Gastrocnemius medialis (tissue), 4 donors: ENCODE measurements at regions of chr6 and their contacts with region 1.

Region 1: DNA sequence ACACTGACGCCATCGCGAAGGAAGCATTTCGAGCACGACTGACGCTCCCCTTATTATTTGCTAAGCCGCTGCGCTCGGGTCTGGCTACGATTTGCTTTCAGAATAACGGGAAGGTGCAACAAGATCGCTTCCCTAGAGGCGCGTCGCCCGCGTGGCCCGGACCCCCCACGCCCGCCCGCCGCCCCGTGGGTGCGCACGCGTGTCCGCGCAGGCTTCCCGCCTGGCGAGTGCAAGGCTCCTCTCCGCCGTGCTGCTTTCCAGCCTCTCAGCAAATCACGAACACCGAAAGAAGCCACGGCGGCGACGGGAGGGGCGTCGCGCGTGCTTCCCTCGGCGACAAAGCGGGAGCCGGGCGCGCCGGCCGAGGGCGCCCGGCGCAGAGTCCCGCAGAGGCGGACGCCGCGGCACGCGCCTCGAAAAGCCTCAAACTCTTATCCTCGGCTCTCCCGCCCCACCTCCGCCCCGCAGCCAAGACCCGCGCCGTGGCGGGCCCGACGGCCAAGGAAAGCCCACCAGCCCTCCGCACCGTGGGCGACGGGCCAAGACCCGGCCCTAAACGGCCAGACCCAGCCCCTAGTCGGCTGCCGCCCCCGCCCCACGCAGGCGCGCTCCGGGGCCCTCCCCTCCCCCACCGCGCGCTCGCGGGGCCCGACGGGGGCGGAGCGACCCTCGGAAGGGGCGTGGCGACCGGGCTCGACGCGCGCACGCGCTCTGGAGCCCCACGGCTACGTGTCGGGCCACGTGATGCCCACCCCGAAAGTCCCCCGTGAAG is 987 bp upstream of the QKI start:
- DNase-seq: peak; percentile 81 to 86
- ATAC-seq: peak; percentile 60 to 62
- H3K4me3 ChIP-seq: peak overlapping the region; percentile 76 to 89 (median 80)
- H3K27ac ChIP-seq: peak overlapping the region; percentile 96 to 99 (median 99)
- H3K4me1 ChIP-seq: peaks cover 0 to 11% of the 10 kb centered on the region in 2 donors
- H3K27me3 ChIP-seq: no peaks in the 10 kb centered on the region
- CTCF ChIP-seq: peak in 2 of 5 experiments; percentile 7 to 12
- POLR2A ChIP-seq: peak; percentile 96 to 98

Region 2: GRCh38 chr6:162727309-162728182 is 686.0 kb before region 1 on chr6 and contains the starts of genes PACRG and PRKN:
- in situ Hi-C with region 1: no loop called
- intact Hi-C with region 1: loop called (anchors 10 kb)
- DNase-seq: peak; percentile 95 to 99
- ATAC-seq: peak; percentile 95 to 96
- H3K4me3 ChIP-seq: peak within 1 kb of the TSS; percentile 74 to 98 (median 82)
- H3K27ac ChIP-seq: peak within 1 kb of the TSS; percentile 92 to 97 (median 94)
- H3K4me1 ChIP-seq: peaks cover 14% of the 10 kb centered on the region in 2 donors
- H3K27me3 ChIP-seq: no peaks in the 10 kb centered on the region
- CTCF ChIP-seq: no peak
- POLR2A ChIP-seq: peak; percentile 92 to 96
- total RNA-seq, gene PACRG: 0.29 to 1.6 (median 0.61) TPM
- total RNA-seq, gene PRKN: 8.4 to 21.6 (median 13.7) TPM

Region 3: DNA sequence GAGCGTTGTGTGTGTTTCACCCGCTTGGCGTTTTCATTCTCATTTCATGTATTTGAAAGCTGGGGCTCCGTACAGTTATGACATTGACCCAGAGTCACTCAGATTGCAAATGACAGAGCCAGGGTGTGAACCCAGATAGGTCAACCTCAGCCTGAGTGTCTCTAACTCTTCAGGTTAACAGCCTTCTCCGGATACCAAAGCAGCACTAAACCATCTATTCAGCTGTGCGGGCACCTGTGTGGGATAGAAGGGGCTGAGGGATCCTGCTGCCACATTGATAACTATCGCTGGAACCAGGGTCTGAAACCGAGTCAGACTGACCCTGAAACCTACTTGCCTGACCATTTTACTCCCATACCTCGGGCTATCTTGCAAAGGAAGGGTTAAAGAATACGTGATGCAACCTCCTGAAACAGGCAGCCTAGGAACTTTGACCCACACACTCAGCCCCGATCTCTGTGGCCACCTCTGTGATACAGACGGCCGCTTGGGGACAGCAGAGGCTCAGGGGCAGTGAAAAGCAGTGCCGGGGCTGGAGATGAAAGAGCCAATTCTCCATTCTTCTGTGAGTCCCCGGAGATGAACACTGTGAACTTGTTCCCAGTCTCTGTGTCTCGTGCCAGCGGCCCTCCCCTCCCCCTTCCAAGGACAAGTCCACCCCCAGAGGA is 232.5 kb before region 1 on chr6:
- in situ Hi-C with region 1: loop called (anchors 5 to 10 kb)
- intact Hi-C with region 1: loop called (anchors 2 kb)
- DNase-seq: peak; percentile 64 to 87
- ATAC-seq: peak; percentile 89 to 96
- H3K4me3 ChIP-seq: peak overlapping the region; percentile 17 to 54 (median 42)
- H3K27ac ChIP-seq: peak overlapping the region; percentile 50 to 69 (median 63)
- H3K4me1 ChIP-seq: peaks cover 17 to 31% of the 10 kb centered on the region in 2 donors
- H3K27me3 ChIP-seq: no peaks in the 10 kb centered on the region
- CTCF ChIP-seq: peak; percentile 81 to 97 (median 87)
- POLR2A ChIP-seq: no peak

Region 4: DNA sequence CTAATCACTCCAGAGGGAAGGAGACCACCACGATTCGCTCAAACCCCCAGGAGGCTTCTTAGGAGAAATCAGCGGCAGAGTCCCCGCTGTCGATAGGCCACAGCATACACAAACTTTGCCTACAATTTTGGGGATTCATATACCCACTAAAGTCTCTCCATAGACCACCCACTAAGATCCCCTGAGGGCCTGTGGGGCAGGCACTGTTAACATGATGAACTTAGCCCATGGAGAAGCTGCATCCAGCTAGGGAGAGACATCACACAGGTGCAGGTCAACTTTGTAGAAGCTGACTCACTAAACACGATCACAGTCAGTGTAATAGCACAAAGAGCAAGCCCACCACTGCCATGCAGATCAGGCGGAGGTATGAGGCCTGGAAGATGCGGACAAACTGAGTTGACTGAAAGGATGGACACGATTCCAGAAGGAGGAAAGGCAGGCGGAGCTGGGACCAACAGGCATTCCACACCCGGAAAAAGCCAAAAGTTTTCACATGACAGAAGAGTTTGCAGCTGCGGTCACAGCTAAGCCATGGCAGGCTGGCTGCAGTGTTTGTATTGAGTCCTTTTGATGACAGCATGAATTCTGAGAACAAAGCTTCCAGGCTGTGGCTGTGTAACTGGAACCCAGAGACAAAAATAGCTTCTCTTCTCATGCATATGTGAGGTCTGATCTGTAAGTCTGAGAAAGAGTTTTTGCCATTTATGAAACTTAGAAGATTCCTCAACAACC is 74.7 kb before region 1 on chr6:
- in situ Hi-C with region 1: loop called in 1 of 4 experiments (anchors 5 kb)
- intact Hi-C with region 1: loop called (anchors 1 kb)
- DNase-seq: peak; percentile 73 to 84
- ATAC-seq: peak; percentile 82 to 83
- H3K4me3 ChIP-seq: peak overlapping the region in 3 of 4 donors; percentile 10 to 16 (median 15)
- H3K27ac ChIP-seq: peak overlapping the region; percentile 92 to 99 (median 94)
- H3K4me1 ChIP-seq: peaks cover 65 to 69% of the 10 kb centered on the region in 2 donors
- H3K27me3 ChIP-seq: no peaks in the 10 kb centered on the region
- CTCF ChIP-seq: no peak
- POLR2A ChIP-seq: no peak

Region 5: DNA sequence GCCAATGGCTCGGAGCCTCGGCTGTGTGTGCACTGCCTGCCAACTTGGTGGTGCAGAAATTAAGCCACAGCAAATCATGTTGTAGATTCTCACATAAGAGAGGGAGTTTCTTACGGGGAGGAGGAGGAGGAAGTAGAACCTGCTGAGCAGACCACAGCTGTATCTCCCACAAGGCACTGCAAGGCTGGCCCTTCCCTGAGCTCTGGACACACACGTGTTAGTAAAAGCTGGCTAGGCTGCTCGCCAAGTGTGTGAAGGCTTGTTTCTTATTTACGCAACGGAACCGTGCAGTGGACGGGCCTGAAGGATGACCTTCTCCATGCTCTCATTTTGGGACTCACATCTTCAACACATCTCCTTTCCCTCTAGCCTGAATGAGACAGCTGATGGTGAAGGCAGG is 14.7 kb before region 1 on chr6:
- in situ Hi-C with region 1: no loop called
- intact Hi-C with region 1: no loop called
- DNase-seq: peak; percentile 13 to 51
- ATAC-seq: peak in 1 of 2 donors; percentile 18
- H3K4me3 ChIP-seq: no peak overlapping the region
- H3K27ac ChIP-seq: no peak overlapping the region
- H3K4me1 ChIP-seq: peaks cover 14 to 15% of the 10 kb centered on the region in 2 donors
- H3K27me3 ChIP-seq: no peaks in the 10 kb centered on the region
- CTCF ChIP-seq: no peak
- POLR2A ChIP-seq: no peak

Region 6: DNA sequence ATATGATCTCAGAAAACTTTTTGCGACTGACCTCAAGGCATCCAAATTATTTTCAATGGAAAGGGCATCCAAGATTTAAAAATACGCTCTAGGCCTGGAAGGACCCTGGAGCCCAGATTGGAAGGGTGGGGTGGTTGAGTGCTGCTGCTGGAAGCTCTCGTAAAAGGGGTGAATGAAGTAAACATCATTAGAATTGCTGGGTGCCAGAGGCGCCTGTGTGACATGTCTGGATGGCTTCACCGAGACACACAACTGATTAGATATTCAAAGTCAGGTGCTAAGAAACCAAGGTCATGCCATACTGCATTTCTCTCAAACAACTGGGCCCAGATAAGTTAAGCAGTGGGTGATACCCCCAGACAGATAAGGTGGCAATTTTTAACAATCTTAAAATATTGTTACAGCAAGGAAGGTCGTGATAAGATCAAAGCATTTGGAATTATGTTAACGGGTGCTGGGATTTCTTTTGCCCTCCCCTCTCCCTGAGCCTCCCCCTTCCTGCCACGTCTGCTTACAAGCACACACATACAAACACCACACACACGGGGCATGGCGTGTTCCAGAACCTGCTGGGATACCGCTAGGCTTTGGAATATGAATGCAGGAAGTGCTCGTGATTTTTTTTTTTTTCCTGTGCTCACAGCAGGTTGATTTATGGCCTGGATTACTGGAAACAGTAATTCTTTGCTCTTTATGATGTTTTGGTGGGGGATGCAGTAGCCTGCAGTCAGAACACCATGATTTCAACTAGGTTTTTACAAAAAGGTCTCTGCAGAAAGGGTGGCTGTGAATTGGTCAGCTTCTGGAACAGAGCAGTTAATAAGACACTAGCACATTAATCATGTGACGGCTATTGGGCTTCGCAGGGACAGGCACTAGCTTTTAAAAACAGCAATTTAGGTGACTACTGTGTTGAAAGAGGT is 552.2 kb after region 1 on chr6:
- in situ Hi-C with region 1: no loop called
- intact Hi-C with region 1: loop called (anchors 2 kb)
- DNase-seq: peak; percentile 75 to 79
- ATAC-seq: peak; percentile 24 to 51
- H3K4me3 ChIP-seq: peak overlapping the region in 2 of 4 donors; percentile 1
- H3K27ac ChIP-seq: peak overlapping the region; percentile 81 to 99 (median 92)
- H3K4me1 ChIP-seq: peaks cover 49 to 50% of the 10 kb centered on the region in 2 donors
- H3K27me3 ChIP-seq: no peaks in the 10 kb centered on the region
- CTCF ChIP-seq: no peak
- POLR2A ChIP-seq: peak in 1 of 2 donors; percentile 7

Region 7: GRCh38 chr6:164927288-164928056 is 1513.9 kb after region 1 on chr6:
- in situ Hi-C with region 1: no loop called
- intact Hi-C with region 1: loop called (anchors 10 kb)
- DNase-seq: peak; percentile 37 to 61
- ATAC-seq: peak; percentile 88 to 97
- H3K4me3 ChIP-seq: peak overlapping the region; percentile 38 to 69 (median 51)
- H3K27ac ChIP-seq: peak overlapping the region in 3 of 4 donors; percentile 27 to 54 (median 47)
- H3K4me1 ChIP-seq: peaks cover 8 to 21% of the 10 kb centered on the region in 2 donors
- H3K27me3 ChIP-seq: no peaks in the 10 kb centered on the region
- CTCF ChIP-seq: peak; percentile 88 to 99 (median 93)
- POLR2A ChIP-seq: no peak